Activated CD8-positive, alpha-beta T cell treated with anti-CD3 and anti-CD28 coated beads, Interleukin-2, amount 10 ng/mL, durations not matched to agents 7 days and 5 days (primary cell): ENCODE measurements at regions of chr2 and their contacts with region 1.

Region 1: GRCh38 chr2:102485147-102485785 is 12.2 kb downstream of the SLC9A4 start:
- DNase-seq: no peak
- ATAC-seq: no peak
- H3K4me3 Mint-ChIP-seq: no peak overlapping the region
- H3K27ac Mint-ChIP-seq: no peak overlapping the region
- H3K4me1 Mint-ChIP-seq: peaks cover 18% of the 10 kb centered on the region
- H3K27me3 Mint-ChIP-seq: peaks cover 8% of the 10 kb centered on the region

Region 2: GRCh38 chr2:102391565-102391964 is 93.7 kb before region 1 on chr2:
- CTCF ChIA-PET with region 1: no interaction called
- POLR2A ChIA-PET with region 1: no interaction called
- DNase-seq: no peak
- ATAC-seq: no peak
- H3K4me3 Mint-ChIP-seq: no peak overlapping the region
- H3K27ac Mint-ChIP-seq: no peak overlapping the region
- H3K4me1 Mint-ChIP-seq: peaks cover 9% of the 10 kb centered on the region
- H3K27me3 Mint-ChIP-seq: no peaks in the 10 kb centered on the region

Region 3: DNA sequence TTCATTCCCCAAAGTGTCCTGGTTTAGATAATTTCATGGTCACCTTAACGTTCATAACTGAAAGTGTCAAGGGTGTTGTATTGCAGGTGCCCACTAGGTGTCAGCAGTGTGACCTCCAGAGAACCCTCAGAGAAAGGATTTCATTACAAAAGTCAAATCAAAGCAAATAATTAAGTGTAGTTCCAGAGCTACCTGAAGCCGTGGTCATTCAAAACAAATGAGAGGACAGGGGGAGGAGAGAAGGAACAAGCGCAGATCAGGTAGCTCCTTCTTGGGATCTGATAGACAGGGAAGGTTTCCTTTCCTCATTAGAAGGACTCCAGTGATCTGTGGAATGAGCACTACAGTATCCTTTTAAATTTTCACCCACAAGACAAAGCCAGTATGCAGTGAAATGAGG is 12.2 kb before region 1 on chr2 and contains the start of gene SLC9A4:
- CTCF ChIA-PET with region 1: interaction called, 22 read pairs
- POLR2A ChIA-PET with region 1: no interaction called
- DNase-seq: peak; percentile 73
- ATAC-seq: no peak
- H3K4me3 Mint-ChIP-seq: no peak within 1 kb of the TSS
- H3K27ac Mint-ChIP-seq: no peak within 1 kb of the TSS
- H3K4me1 Mint-ChIP-seq: no peaks in the 10 kb centered on the region
- H3K27me3 Mint-ChIP-seq: peaks cover 35% of the 10 kb centered on the region
- total RNA-seq, gene SLC9A4: 0.08 TPM

Region 4: GRCh38 chr2:102520028-102520427 is 34.8 kb after region 1 on chr2:
- CTCF ChIA-PET with region 1: no interaction called
- POLR2A ChIA-PET with region 1: no interaction called
- DNase-seq: peak; percentile 31
- ATAC-seq: no peak
- H3K4me3 Mint-ChIP-seq: no peak overlapping the region
- H3K27ac Mint-ChIP-seq: no peak overlapping the region
- H3K4me1 Mint-ChIP-seq: no peaks in the 10 kb centered on the region
- H3K27me3 Mint-ChIP-seq: peaks cover 5% of the 10 kb centered on the region

Region 5: DNA sequence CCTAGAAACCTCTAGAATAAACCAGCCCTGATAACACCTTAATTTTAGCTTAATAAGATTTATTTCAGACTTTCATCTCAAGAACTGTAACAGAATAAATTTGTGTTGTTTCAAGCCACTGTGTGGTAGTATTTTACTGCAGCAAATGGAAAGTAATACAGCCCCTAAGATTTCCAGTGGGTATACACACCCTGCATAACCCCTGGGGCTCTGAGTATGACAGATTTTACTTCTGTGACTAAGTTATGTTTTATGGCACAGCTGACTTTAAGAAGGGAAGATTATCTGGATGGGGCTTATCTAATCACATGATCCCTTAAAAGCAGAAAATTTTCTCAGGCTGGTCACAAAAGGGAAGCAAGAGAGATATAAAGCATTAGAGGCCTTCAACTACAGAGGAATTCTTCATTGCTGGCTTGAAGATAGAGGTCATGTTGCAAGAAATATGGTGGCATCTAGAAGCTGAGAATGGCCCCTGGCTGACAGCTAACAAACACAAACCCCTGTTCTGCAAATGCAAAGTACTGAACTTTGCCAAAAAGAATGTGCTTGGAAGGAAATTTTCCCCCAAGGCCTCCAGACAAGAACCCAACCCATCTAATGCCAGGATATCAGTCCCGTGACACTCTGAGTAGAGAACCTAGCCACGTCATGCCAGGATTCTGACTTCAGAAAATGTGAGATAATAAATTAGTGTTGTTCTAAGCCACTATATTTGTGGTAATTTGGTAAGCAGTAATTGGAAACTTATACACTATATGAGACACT is 66.2 kb after region 1 on chr2:
- CTCF ChIA-PET with region 1: no interaction called
- POLR2A ChIA-PET with region 1: no interaction called
- DNase-seq: no peak
- ATAC-seq: no peak
- H3K4me3 Mint-ChIP-seq: no peak overlapping the region
- H3K27ac Mint-ChIP-seq: no peak overlapping the region
- H3K4me1 Mint-ChIP-seq: no peaks in the 10 kb centered on the region
- H3K27me3 Mint-ChIP-seq: no peaks in the 10 kb centered on the region